ENCODE measurements at regions of chr11 and their contacts with region 1.

Region 1: GRCh38 chr11:44943118-44943517 is 7.6 kb downstream of the TP53I11 start:
- DNase-seq: no peak
- H3K4me3 Mint-ChIP-seq: no peak overlapping the region
- H3K27ac Mint-ChIP-seq: no peak overlapping the region
- H3K4me1 Mint-ChIP-seq: peaks cover 4% of the 10 kb centered on the region
- H3K27me3 Mint-ChIP-seq: peaks cover 49% of the 10 kb centered on the region

Region 2: DNA sequence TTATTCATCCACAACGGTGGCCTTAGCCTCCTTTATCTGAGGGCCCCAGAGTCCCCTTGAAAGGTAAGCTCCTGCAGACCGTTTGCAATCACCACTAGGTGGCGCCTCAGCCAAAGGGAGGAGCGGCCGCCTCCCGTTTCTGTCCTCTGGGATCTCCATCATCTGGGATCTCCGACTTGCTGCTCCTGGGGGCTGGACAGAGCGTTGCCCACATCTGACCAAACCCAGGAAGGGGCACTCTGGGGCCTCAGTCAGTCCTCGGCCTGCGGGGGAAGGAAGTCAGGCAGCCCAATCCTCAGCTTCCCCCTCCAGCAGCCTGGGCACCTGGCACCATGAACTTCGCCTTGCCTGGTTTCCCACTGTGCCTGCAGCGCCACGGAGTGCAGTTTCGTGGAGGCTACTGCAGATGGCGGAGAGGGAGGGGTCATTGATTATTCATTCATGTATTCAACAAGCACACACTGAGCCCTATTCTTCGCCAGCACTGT is 15.9 kb before region 1 on chr11:
- CTCF ChIA-PET with region 1: interaction called, 13 read pairs
- DNase-seq: peak; percentile 68
- H3K4me3 Mint-ChIP-seq: no peak overlapping the region
- H3K27ac Mint-ChIP-seq: no peak overlapping the region
- H3K4me1 Mint-ChIP-seq: no peaks in the 10 kb centered on the region
- H3K27me3 Mint-ChIP-seq: no peaks in the 10 kb centered on the region

Measured in activated naive CD4-positive, alpha-beta T cell treated with anti-CD3 and anti-CD28 coated beads, Interleukin-2, amount 10 ng/mL, durations not matched to agents 7 days and 5 days (primary cell).